Right lobe of liver (tissue), 6 donors: ENCODE measurements at regions of chr5 and their contacts with region 1.

Region 1: DNA sequence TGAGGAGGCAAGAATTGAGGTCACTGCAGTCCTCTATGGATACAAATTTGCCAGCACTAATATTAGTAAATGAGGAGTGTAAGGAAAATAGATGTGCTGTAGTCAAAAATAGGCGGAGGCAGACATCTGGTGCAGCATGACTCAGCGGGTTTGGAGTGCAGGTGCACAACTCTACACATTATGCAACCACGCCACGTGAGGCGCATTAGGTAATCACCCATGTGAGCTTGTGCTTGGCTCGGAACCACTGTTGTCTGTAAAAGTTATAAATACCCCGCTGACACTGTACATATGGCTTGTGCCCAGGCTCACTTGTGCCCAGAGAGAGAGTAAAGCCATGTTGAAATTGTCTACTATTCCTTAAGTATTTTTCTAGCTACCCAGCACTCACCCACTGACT is 623.5 kb upstream of the NUDT12 start:
- DNase-seq: peak; percentile 46 to 67 (median 50)
- ATAC-seq: peak; percentile 66 to 81 (median 72)
- H3K4me3 ChIP-seq: no peak overlapping the region
- H3K27ac ChIP-seq: no peak overlapping the region
- H3K4me1 ChIP-seq: no peaks in the 10 kb centered on the region
- H3K27me3 ChIP-seq: no peaks in the 10 kb centered on the region
- CTCF ChIP-seq: no peak
- POLR2A ChIP-seq: no peak

Region 2: GRCh38 chr5:103582364-103582763 is 603.7 kb before region 1 on chr5:
- intact Hi-C with region 1: loop called in 1 of 2 experiments (anchors 10 kb)
- DNase-seq: no peak
- ATAC-seq: peak; percentile 74 to 87 (median 84)
- H3K4me3 ChIP-seq: no peak overlapping the region
- H3K27ac ChIP-seq: no peak overlapping the region
- H3K4me1 ChIP-seq: no peaks in the 10 kb centered on the region
- H3K27me3 ChIP-seq: no peaks in the 10 kb centered on the region
- CTCF ChIP-seq: peak; percentile 50 to 67 (median 62)
- POLR2A ChIP-seq: no peak